ENCODE measurements at regions of chr11 and their contacts with region 1.

Region 1: GRCh38 chr11:102940714-102941588 is 14.6 kb downstream of the MMP13 start:
- DNase-seq: no peak
- ATAC-seq: peak; percentile 37
- H3K4me3 Mint-ChIP-seq: no peak overlapping the region
- H3K27ac Mint-ChIP-seq: no peak overlapping the region
- H3K4me1 Mint-ChIP-seq: no peaks in the 10 kb centered on the region
- H3K27me3 Mint-ChIP-seq: peaks cover 12% of the 10 kb centered on the region
- CTCF ChIP-seq: peak; percentile 81

Region 2: DNA sequence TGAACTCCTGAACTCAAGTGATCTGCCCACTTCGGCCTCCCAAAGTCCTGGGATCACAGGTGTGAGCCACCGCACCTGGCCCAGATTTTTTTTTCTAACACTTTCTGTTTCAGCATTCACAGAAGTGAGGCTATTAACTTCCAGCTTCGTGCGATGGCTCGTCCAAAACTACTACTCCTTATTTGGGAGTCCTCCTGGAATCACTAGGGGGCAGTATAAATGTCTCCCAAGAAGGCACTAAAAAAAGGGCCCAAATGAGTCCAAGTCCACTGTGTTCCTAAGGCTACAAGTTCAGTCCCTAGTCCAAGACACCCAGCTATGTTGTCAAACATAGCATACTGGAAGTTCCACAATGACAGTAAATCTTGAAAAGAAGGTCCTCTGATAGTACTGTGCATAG is 686.9 kb before region 1 on chr11:
- CTCF ChIA-PET with region 1: no interaction called
- POLR2A ChIA-PET with region 1: no interaction called
- intact Hi-C with region 1: loop called (anchors 2 kb)
- DNase-seq: no peak
- ATAC-seq: no peak
- H3K4me3 Mint-ChIP-seq: no peak overlapping the region
- H3K27ac Mint-ChIP-seq: no peak overlapping the region
- H3K4me1 Mint-ChIP-seq: no peaks in the 10 kb centered on the region
- H3K27me3 Mint-ChIP-seq: peaks cover under 1% of the 10 kb centered on the region
- CTCF ChIP-seq: no peak

Region 3: DNA sequence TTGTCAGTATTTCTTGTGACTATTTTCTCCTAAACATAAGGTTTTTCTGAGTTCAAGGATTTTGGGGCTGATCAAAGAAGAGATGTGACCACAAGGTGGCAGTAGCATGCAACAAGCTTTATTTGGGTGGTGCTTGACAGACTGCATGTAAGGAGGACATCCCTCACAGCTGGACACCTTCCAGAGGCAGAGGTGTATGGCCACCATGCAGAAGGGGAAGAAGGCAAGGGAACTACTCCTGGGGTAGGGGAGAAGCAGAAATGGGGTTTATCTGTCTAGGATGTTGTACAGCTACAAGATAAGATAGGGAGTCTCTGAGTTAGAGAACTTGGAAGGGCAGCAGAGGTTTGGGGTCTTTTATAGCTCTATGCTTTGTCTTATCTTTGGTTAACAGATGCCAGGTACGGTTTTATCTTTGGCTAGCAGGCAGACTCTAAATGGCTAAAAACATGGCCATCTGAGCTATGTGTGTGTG is 599.1 kb before region 1 on chr11:
- CTCF ChIA-PET with region 1: interaction called, 3 read pairs
- POLR2A ChIA-PET with region 1: no interaction called
- intact Hi-C with region 1: loop called (anchors 5 kb)
- DNase-seq: no peak
- ATAC-seq: peak; percentile 37
- H3K4me3 Mint-ChIP-seq: no peak overlapping the region
- H3K27ac Mint-ChIP-seq: peak overlapping the region; percentile 42
- H3K4me1 Mint-ChIP-seq: peaks cover 29% of the 10 kb centered on the region
- H3K27me3 Mint-ChIP-seq: no peaks in the 10 kb centered on the region
- CTCF ChIP-seq: peak; percentile 50

Region 4: DNA sequence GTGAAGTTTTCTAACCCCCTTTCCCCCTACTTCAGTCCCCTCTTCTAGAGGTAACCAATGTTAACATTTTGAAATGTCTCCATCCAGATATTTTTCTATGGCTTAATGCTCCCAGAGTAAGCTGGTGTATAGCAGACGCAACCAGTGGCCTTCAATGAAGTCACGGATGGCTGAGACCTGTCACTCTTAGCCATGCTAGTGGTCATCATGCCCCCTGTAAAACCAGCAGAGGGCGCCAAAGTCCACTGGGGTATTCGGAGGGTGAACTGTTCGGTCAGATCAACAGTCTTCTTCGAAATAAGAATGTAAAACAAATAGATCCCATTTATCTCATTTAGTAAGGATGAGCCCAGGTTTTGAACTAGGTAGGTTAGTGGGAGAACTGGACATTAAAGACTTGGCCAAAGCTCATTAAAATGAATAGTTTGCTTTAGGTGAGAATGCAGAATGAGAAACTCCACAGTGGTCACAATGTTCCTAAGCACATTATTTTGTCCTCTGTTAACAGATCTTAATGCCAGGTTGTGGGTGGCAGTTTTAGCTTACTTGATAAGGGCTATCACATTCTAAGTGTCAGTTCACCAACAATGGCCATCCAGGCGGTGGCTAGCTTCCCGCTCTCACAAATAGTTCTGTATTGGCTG is 207.6 kb before region 1 on chr11:
- CTCF ChIA-PET with region 1: no interaction called
- POLR2A ChIA-PET with region 1: no interaction called
- intact Hi-C with region 1: loop called (anchors 1 kb)
- DNase-seq: no peak
- ATAC-seq: no peak
- H3K4me3 Mint-ChIP-seq: no peak overlapping the region
- H3K27ac Mint-ChIP-seq: no peak overlapping the region
- H3K4me1 Mint-ChIP-seq: no peaks in the 10 kb centered on the region
- H3K27me3 Mint-ChIP-seq: peaks cover 27% of the 10 kb centered on the region
- CTCF ChIP-seq: no peak

Region 5: GRCh38 chr11:102794447-102794781 is 146.5 kb before region 1 on chr11:
- CTCF ChIA-PET with region 1: interaction called, 4 read pairs
- POLR2A ChIA-PET with region 1: no interaction called
- intact Hi-C with region 1: loop called (anchors 1 kb)
- DNase-seq: no peak
- ATAC-seq: peak; percentile 76
- H3K4me3 Mint-ChIP-seq: no peak overlapping the region
- H3K27ac Mint-ChIP-seq: peak overlapping the region; percentile 16
- H3K4me1 Mint-ChIP-seq: peaks cover 6% of the 10 kb centered on the region
- H3K27me3 Mint-ChIP-seq: peaks cover 3% of the 10 kb centered on the region
- CTCF ChIP-seq: no peak

Region 6: DNA sequence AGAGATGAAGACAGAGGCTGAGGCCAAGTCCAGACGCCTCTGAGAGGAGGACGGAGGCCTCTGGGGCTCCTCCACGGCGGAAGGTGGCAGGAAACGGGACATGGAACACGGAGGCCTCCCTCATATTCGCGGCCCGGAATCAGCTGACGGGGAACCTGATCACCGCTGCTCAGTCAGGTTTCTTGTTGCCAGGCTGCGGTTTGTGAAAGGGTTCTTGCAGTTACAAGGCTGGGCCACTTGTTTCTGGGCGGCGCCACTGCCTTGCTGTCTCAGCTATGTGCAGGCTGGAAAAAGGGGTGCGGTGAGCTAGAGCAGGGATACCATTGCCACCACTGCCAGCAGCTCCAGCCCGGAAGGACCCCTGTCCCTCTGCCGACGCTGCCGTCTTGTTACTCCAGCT is 133.0 kb before region 1 on chr11:
- CTCF ChIA-PET with region 1: no interaction called
- POLR2A ChIA-PET with region 1: no interaction called
- intact Hi-C with region 1: loop called (anchors 5 kb)
- DNase-seq: no peak
- ATAC-seq: no peak
- H3K4me3 Mint-ChIP-seq: no peak overlapping the region
- H3K27ac Mint-ChIP-seq: no peak overlapping the region
- H3K4me1 Mint-ChIP-seq: no peaks in the 10 kb centered on the region
- H3K27me3 Mint-ChIP-seq: peaks cover 11% of the 10 kb centered on the region
- CTCF ChIP-seq: no peak

Region 7: GRCh38 chr11:102914238-102915043 is 26.5 kb before region 1 on chr11:
- CTCF ChIA-PET with region 1: interaction called, 13 read pairs
- POLR2A ChIA-PET with region 1: no interaction called
- intact Hi-C with region 1: loop called (anchors 1 kb)
- DNase-seq: no peak
- ATAC-seq: no peak
- H3K4me3 Mint-ChIP-seq: no peak overlapping the region
- H3K27ac Mint-ChIP-seq: no peak overlapping the region
- H3K4me1 Mint-ChIP-seq: no peaks in the 10 kb centered on the region
- H3K27me3 Mint-ChIP-seq: peaks cover 1% of the 10 kb centered on the region
- CTCF ChIP-seq: no peak

Measured in activated B cell treated with CpG ODN at 0.5 μM for 24 hours (primary cell).